ENCODE measurements at regions of chr9 and their contacts with region 1.

Region 1: DNA sequence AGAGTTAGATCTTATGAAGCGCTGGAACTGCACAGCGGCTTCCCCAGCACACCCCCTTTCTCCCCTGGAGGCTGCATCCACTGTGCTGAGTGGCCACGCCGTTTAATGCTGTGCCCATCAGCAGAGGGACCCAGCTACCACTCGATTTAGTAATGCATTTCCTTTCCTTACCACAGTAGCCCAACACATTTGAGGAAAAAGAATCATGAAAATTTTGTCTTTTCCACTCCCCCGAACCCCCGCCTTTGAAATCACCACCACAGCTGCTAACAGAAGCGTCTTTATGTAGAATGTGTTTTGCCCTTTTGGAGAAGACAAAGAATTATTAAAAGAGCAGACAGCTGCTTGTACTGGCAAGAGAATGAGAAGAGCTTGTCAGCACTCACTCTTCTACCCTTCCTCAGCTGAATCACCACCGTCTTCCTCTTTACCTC is 73.2 kb downstream of the ACER2 start:
- DNase-seq: no peak
- H3K4me3 ChIP-seq: no peak overlapping the region
- H3K4me3 Mint-ChIP-seq: no peak overlapping the region
- H3K27ac ChIP-seq: no peak overlapping the region
- H3K27ac Mint-ChIP-seq: no peak overlapping the region
- H3K4me1 ChIP-seq: no peaks in the 10 kb centered on the region
- H3K4me1 Mint-ChIP-seq: no peaks in the 10 kb centered on the region
- H3K27me3 ChIP-seq: no peaks in the 10 kb centered on the region
- H3K27me3 Mint-ChIP-seq: peaks cover 4 to 8% of the 10 kb centered on the region in 2 donors

Region 2: GRCh38 chr9:19298436-19299000 is 183.5 kb before region 1 on chr9:
- CTCF ChIA-PET with region 1: no interaction called
- POLR2A ChIA-PET with region 1: no interaction called
- intact Hi-C with region 1: no loop called
- DNase-seq: no peak
- H3K4me3 ChIP-seq: no peak overlapping the region
- H3K4me3 Mint-ChIP-seq: no peak overlapping the region
- H3K27ac ChIP-seq: no peak overlapping the region
- H3K27ac Mint-ChIP-seq: peak overlapping the region in 1 of 7 donors; percentile 21
- H3K4me1 ChIP-seq: no peaks in the 10 kb centered on the region
- H3K4me1 Mint-ChIP-seq: peaks cover 0 to 8% (median under 1%) of the 10 kb centered on the region in 4 donors
- H3K27me3 ChIP-seq: no peaks in the 10 kb centered on the region
- H3K27me3 Mint-ChIP-seq: no peaks in the 10 kb centered on the region

Region 3: DNA sequence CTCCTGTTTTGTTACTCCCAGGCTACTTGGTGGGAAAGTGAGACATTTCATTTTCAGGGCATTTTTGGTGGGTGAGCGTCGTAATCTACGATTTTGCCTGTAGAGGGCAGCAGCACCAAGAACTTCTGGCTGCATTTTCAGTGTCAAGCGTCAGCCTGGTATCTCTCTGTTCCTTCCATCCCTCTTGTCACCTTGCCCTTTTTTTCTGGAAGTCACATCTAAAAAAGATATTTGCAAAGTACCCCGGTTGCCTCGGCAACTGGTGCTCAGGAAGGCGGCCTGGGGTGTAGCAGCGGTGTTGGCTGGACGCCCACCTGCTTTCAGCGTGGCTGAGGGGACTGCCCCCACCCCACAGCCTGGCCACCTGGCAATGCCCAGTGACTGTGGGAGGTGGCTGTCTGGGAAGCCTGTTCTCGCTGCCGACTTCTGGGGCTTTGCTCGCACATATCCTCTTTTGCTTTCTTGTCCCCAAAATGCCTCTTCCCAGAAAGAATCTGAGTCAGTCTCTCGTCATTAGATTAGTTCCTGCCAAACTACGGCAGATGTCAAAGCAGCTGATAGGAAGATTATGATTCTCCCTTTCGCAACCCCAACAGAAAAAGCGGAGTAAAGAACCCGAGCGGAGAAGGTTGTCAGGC is 11.3 kb after region 1 on chr9:
- CTCF ChIA-PET with region 1: interaction called, 11 read pairs
- POLR2A ChIA-PET with region 1: no interaction called
- intact Hi-C with region 1: no loop called
- DNase-seq: peak in 4 of 5 donors; percentile 17 to 32 (median 28)
- H3K4me3 ChIP-seq: no peak overlapping the region
- H3K4me3 Mint-ChIP-seq: peak overlapping the region; percentile 8 to 73 (median 36)
- H3K27ac ChIP-seq: no peak overlapping the region
- H3K27ac Mint-ChIP-seq: peak overlapping the region in 1 of 7 donors; percentile 66
- H3K4me1 ChIP-seq: peaks cover 7% of the 10 kb centered on the region
- H3K4me1 Mint-ChIP-seq: peaks cover 6 to 14% (median 12%) of the 10 kb centered on the region in 4 donors
- H3K27me3 ChIP-seq: no peaks in the 10 kb centered on the region
- H3K27me3 Mint-ChIP-seq: peaks cover 4 to 12% of the 10 kb centered on the region in 2 donors

Region 4: GRCh38 chr9:19513671-19514275 is 31.8 kb after region 1 on chr9:
- CTCF ChIA-PET with region 1: no interaction called
- POLR2A ChIA-PET with region 1: no interaction called
- intact Hi-C with region 1: no loop called
- DNase-seq: no peak
- H3K4me3 ChIP-seq: no peak overlapping the region
- H3K4me3 Mint-ChIP-seq: no peak overlapping the region
- H3K27ac ChIP-seq: no peak overlapping the region
- H3K27ac Mint-ChIP-seq: no peak overlapping the region
- H3K4me1 ChIP-seq: no peaks in the 10 kb centered on the region
- H3K4me1 Mint-ChIP-seq: peaks cover 0 to 2% (median 0%) of the 10 kb centered on the region in 4 donors
- H3K27me3 ChIP-seq: no peaks in the 10 kb centered on the region
- H3K27me3 Mint-ChIP-seq: peaks cover 10 to 11% of the 10 kb centered on the region in 2 donors

Measured in CD4-positive, alpha-beta memory T cell (primary cell).